B cell (primary cell): ENCODE measurements at regions of chr1 and their contacts with region 1.

Region 1: DNA sequence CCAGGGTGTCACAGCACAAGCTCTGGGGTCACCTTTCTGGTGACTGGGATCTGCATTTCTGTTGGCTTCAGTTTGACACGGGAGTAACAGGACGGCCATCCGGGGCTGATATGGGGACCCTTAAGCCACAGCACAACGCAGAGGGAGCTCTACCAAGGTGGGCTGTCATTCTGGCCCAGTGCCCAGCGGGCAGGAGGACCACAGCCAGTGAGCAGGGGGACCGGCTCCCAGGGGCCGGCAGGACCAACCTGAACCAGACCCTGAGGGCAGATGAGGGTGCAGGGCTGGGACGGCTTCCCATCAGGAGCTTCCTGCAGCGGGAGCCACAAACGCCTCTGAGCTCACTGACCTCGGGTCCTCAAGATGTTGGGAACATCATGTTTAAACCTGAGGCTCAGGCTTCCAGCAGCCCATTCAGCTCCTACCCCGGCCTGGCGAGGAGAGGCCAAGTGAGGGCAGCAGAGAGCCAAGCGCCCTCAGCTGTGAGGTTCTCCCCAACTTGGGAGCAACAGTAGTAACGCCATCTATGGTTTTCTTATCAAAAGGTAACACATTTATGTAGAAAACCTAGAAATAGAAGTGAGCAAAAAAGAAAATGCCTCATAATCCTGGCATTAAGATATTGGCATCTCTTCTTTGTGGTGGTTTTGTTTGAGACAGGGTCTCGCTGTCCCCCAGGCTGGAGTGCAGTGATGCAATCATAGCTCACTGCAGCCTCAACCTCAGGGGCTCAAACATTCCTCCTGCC is 26.8 kb downstream of the TMEM201 start:
- DNase-seq: peak; percentile 72
- ATAC-seq: peak; percentile 96
- H3K4me3 ChIP-seq: no peak overlapping the region
- H3K4me3 Mint-ChIP-seq: no peak overlapping the region
- H3K27ac ChIP-seq: no peak overlapping the region
- H3K27ac Mint-ChIP-seq: no peak overlapping the region
- H3K4me1 ChIP-seq: peaks cover 4 to 9% of the 10 kb centered on the region in 2 donors
- H3K4me1 Mint-ChIP-seq: peaks cover 2% of the 10 kb centered on the region
- H3K27me3 ChIP-seq: no peaks in the 10 kb centered on the region
- H3K27me3 Mint-ChIP-seq: peaks cover 3% of the 10 kb centered on the region
- CTCF ChIP-seq: peak; percentile 76

Region 2: GRCh38 chr1:9659328-9659998 is 44.0 kb after region 1 on chr1:
- CTCF ChIA-PET with region 1: interaction called, 12 read pairs
- POLR2A ChIA-PET with region 1: no interaction called
- intact Hi-C with region 1: loop called (anchors 5 kb)
- DNase-seq: no peak
- ATAC-seq: no peak
- H3K4me3 ChIP-seq: no peak overlapping the region
- H3K4me3 Mint-ChIP-seq: no peak overlapping the region
- H3K27ac ChIP-seq: peak overlapping the region in 1 of 2 donors; percentile 0
- H3K27ac Mint-ChIP-seq: peak overlapping the region; percentile 82
- H3K4me1 ChIP-seq: peaks cover 49 to 66% of the 10 kb centered on the region in 2 donors
- H3K4me1 Mint-ChIP-seq: peaks cover 73% of the 10 kb centered on the region
- H3K27me3 ChIP-seq: no peaks in the 10 kb centered on the region
- H3K27me3 Mint-ChIP-seq: no peaks in the 10 kb centered on the region
- CTCF ChIP-seq: no peak

Region 3: DNA sequence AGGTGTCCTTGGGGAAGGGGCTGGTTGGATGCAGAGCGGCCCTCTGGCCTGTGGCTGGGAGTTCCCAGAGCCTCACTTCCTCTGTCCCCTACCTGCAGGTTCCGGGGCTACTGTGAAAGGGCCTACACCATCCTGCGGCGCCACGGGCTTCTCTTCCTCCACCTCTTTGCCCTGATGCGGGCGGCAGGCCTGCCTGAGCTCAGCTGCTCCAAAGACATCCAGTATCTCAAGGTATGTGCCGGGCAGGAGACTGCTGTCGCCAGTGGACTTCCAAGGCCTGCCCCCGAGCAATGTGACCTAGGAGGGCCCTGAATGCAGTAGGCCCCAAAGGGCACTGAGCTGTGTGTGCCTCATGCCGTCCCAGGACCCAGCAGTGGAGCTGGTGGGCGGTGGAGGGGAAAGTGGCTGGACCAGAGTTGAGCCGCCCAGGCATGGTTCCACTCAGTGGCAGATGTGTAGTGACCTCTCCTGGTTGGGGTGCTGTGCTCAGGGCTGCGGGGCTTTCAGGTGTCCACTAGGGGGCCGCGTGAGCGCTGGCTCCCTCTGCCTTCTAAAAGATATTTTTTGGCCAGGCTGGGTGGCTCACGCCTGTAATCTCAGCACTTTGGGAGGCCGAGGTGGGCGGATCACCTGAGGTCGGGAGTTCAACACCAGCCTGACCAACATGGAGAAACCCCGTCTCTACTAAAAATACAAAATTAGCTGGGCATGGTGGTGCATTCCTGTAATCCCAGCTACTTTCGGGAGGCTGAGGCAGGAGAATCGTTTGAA is 109.4 kb after region 1 on chr1:
- CTCF ChIA-PET with region 1: interaction called, 23 read pairs
- POLR2A ChIA-PET with region 1: interaction called, 5 read pairs
- intact Hi-C with region 1: no loop called
- DNase-seq: peak; percentile 79
- ATAC-seq: peak; percentile 77
- H3K4me3 ChIP-seq: no peak overlapping the region
- H3K4me3 Mint-ChIP-seq: no peak overlapping the region
- H3K27ac ChIP-seq: peak overlapping the region in 1 of 2 donors; percentile 18
- H3K27ac Mint-ChIP-seq: peak overlapping the region; percentile 77
- H3K4me1 ChIP-seq: peaks cover 8 to 26% of the 10 kb centered on the region in 2 donors
- H3K4me1 Mint-ChIP-seq: peaks cover 17% of the 10 kb centered on the region
- H3K27me3 ChIP-seq: no peaks in the 10 kb centered on the region
- H3K27me3 Mint-ChIP-seq: no peaks in the 10 kb centered on the region
- CTCF ChIP-seq: peak; percentile 88

Region 4: DNA sequence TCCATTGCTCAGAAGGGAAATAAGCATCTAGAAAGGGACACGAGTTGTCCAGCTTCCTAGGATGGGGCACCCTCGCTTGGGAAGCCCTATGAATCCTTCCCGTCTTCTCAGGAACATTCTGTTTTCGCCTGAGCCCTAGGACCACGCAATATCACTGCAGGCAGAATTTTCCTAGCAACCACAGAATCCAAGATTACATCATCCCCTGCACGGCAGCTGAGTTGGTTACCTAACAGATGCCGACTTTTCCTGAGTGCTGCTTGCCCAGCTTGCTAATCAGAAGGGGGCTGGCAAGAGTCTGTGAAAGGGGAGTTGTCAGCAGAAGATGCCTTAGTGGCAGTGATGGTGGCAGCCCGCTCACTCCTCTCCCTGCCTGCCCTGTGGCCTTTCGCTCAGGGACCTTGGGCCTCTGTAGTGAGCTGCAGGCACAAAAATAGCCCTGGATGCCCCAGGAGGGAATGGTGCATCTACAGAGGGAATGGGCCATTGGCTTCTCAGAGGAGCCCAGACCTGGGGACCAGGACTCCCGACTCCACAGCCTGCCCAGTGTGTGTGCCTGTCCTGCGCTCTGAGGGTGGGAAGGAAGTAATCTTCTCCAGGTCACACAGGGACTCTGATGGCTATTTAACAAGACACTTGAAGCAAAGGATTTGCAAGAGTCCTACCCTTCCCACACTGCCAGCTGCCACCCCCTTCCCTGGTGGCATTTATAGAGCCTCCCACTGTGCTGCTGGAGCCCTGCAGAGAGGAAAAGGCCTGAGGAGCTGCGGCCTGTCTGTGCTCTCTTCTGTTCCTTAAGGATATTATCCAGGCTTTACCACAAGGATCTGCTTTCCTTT is 237.1 kb after region 1 on chr1:
- CTCF ChIA-PET with region 1: interaction called, 11 read pairs
- POLR2A ChIA-PET with region 1: no interaction called
- intact Hi-C with region 1: no loop called
- DNase-seq: no peak
- ATAC-seq: no peak
- H3K4me3 ChIP-seq: no peak overlapping the region
- H3K4me3 Mint-ChIP-seq: no peak overlapping the region
- H3K27ac ChIP-seq: no peak overlapping the region
- H3K27ac Mint-ChIP-seq: no peak overlapping the region
- H3K4me1 ChIP-seq: peaks cover 21 to 36% of the 10 kb centered on the region in 2 donors
- H3K4me1 Mint-ChIP-seq: peaks cover 26% of the 10 kb centered on the region
- H3K27me3 ChIP-seq: no peaks in the 10 kb centered on the region
- H3K27me3 Mint-ChIP-seq: no peaks in the 10 kb centered on the region
- CTCF ChIP-seq: no peak

Region 5: DNA sequence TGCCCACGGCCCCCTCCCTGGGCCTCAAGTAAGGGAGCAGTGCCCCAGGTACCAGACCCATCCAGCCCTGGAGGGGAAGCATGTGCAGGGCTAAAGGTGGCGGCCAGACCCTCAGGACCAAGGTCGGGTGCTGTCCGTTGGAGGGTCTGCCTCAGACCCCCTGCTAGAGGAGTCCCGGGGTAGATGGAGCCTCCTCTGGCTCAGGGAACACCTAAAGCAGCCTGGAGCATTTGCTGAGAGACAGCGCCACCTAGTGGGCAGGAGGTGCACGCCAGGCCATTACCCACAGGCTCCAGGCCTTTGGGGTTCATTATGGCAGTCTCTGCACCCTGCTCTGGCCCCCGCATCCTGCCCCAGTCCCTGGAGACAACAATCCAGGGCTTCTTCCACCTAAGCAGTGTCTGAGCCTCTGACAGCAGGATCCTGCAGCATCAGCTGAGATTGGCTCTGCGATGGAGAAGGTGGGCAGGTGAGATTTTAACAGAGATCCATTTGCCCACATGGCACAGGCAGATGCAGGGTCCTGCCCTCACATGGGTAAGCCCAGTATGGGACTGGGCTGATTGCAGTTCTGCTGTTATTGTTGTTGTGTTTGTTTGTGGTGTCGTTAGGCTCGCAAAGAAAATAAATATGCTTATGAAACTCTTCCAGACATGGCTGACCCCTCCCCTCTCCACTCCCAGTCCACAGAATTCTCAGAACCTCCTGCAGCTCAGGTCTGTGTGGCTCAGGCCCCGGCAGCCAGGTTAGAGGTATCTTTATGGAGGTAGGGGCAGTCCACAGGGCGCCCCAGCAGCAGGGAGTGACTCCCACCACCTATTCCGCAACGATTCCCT is 252.1 kb after region 1 on chr1:
- CTCF ChIA-PET with region 1: interaction called, 150 read pairs
- POLR2A ChIA-PET with region 1: no interaction called
- intact Hi-C with region 1: loop called (anchors 1 kb)
- DNase-seq: peak; percentile 88
- ATAC-seq: peak; percentile 96
- H3K4me3 ChIP-seq: no peak overlapping the region
- H3K4me3 Mint-ChIP-seq: no peak overlapping the region
- H3K27ac ChIP-seq: no peak overlapping the region
- H3K27ac Mint-ChIP-seq: no peak overlapping the region
- H3K4me1 ChIP-seq: peaks cover 0 to 8% of the 10 kb centered on the region in 2 donors
- H3K4me1 Mint-ChIP-seq: peaks cover 3% of the 10 kb centered on the region
- H3K27me3 ChIP-seq: no peaks in the 10 kb centered on the region
- H3K27me3 Mint-ChIP-seq: no peaks in the 10 kb centered on the region
- CTCF ChIP-seq: peak; percentile 96

Region 6: GRCh38 chr1:9874959-9875635 is 259.6 kb after region 1 on chr1:
- CTCF ChIA-PET with region 1: interaction called, 150 read pairs
- POLR2A ChIA-PET with region 1: no interaction called
- intact Hi-C with region 1: no loop called
- DNase-seq: peak; percentile 86
- ATAC-seq: peak; percentile 98
- H3K4me3 ChIP-seq: no peak overlapping the region
- H3K4me3 Mint-ChIP-seq: no peak overlapping the region
- H3K27ac ChIP-seq: no peak overlapping the region
- H3K27ac Mint-ChIP-seq: no peak overlapping the region
- H3K4me1 ChIP-seq: peaks cover 0 to 9% of the 10 kb centered on the region in 2 donors
- H3K4me1 Mint-ChIP-seq: peaks cover 4% of the 10 kb centered on the region
- H3K27me3 ChIP-seq: no peaks in the 10 kb centered on the region
- H3K27me3 Mint-ChIP-seq: no peaks in the 10 kb centered on the region
- CTCF ChIP-seq: peak; percentile 95

Region 7: GRCh38 chr1:10117865-10118264 is 502.4 kb after region 1 on chr1:
- CTCF ChIA-PET with region 1: no interaction called
- POLR2A ChIA-PET with region 1: no interaction called
- intact Hi-C with region 1: no loop called
- DNase-seq: no peak
- ATAC-seq: no peak
- H3K4me3 ChIP-seq: no peak overlapping the region
- H3K4me3 Mint-ChIP-seq: no peak overlapping the region
- H3K27ac ChIP-seq: no peak overlapping the region
- H3K27ac Mint-ChIP-seq: no peak overlapping the region
- H3K4me1 ChIP-seq: no peaks in the 10 kb centered on the region
- H3K4me1 Mint-ChIP-seq: no peaks in the 10 kb centered on the region
- H3K27me3 ChIP-seq: no peaks in the 10 kb centered on the region
- H3K27me3 Mint-ChIP-seq: no peaks in the 10 kb centered on the region
- CTCF ChIP-seq: no peak